Naive thymus-derived CD4-positive, alpha-beta T cell (primary cell): ENCODE measurements at regions of chrX and their contacts with region 1.

Region 1: GRCh38 chrX:129606918-129607317 is 47.8 kb downstream of the APLN start:
- DNase-seq: peak in 8 of 9 donors; percentile 29 to 63 (median 54)
- ATAC-seq: peak; percentile 75
- H3K4me3 ChIP-seq: no peak overlapping the region
- H3K4me3 Mint-ChIP-seq: no peak overlapping the region
- H3K27ac ChIP-seq: no peak overlapping the region
- H3K27ac Mint-ChIP-seq: peak overlapping the region in 1 of 9 donors; percentile 84
- H3K4me1 ChIP-seq: peaks cover 5 to 7% of the 10 kb centered on the region in 2 donors
- H3K4me1 Mint-ChIP-seq: peaks cover 4 to 35% (median 16%) of the 10 kb centered on the region in 7 donors
- H3K27me3 ChIP-seq: no peaks in the 10 kb centered on the region
- H3K27me3 Mint-ChIP-seq: no peaks in the 10 kb centered on the region

Region 2: DNA sequence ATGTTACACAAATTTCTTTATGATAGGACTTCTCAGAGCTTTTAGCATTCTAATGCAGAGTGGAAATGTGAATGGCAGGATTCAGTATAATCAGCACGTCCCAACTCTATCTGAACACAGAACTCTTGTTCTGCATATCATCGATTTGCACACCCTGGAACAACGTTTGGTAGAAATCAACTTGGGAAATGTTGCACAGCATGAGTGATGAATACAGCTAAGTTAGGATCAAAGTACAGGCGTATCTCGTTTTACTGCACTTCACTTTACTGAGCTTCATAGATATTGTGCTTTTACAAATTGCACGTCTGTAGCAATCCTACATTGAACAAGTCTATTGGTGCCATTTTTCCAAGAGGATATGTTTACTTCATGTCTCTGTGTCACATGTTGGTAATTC is 154.4 kb before region 1 on chrX:
- CTCF ChIA-PET with region 1: no interaction called
- POLR2A ChIA-PET with region 1: no interaction called
- intact Hi-C with region 1: no loop called
- DNase-seq: no peak
- ATAC-seq: no peak
- H3K4me3 ChIP-seq: no peak overlapping the region
- H3K4me3 Mint-ChIP-seq: no peak overlapping the region
- H3K27ac ChIP-seq: no peak overlapping the region
- H3K27ac Mint-ChIP-seq: no peak overlapping the region
- H3K4me1 ChIP-seq: no peaks in the 10 kb centered on the region
- H3K4me1 Mint-ChIP-seq: no peaks in the 10 kb centered on the region
- H3K27me3 ChIP-seq: no peaks in the 10 kb centered on the region
- H3K27me3 Mint-ChIP-seq: no peaks in the 10 kb centered on the region

Region 3: DNA sequence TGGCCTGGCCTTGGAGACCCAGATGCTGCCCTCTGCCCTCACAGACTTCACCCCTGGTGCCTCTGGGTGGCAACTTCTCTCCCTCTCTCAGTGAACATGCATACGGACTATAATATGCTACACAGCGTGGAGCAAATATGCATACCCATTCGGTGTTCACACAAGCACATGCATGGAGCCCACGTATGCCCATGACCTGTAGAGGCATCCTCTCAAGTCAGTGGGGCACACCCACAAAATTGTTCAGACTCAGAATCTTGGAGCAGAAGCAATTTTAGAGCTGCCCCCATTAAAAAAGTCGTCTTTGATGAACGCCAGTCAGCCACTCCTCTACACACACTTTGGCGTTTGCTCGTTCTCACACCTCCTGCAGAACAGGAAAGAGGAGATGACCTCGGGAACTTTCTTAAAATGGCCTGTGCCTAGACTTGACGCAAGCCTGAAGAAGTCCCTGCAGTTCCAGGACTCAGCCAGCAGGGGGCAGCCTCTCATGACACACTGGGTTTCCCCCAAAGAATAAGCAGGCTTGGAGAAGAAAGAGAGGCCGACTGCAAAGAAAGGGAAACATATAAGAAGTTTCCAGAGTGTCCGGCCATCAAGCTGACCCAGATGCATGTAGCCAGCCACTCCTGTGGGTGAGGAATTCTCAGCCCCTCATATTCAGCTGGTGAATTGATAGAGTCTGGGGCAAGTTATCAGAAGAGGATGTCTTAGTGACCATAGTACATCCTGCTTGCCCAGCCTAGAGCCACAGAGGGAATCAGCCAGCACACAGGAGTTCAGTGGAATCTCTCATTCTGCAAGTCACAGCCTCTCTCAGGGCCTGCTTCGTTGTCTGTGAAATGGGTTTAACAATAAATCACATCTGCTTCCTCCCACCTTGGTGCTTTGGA is 30.5 kb after region 1 on chrX:
- CTCF ChIA-PET with region 1: no interaction called
- POLR2A ChIA-PET with region 1: no interaction called
- intact Hi-C with region 1: loop called (anchors 1 to 2 kb)
- DNase-seq: peak; percentile 48 to 80 (median 63)
- ATAC-seq: peak; percentile 92
- H3K4me3 ChIP-seq: no peak overlapping the region
- H3K4me3 Mint-ChIP-seq: no peak overlapping the region
- H3K27ac ChIP-seq: no peak overlapping the region
- H3K27ac Mint-ChIP-seq: peak overlapping the region in 3 of 9 donors; percentile 34 to 68 (median 55)
- H3K4me1 ChIP-seq: peaks cover 0 to 4% of the 10 kb centered on the region in 2 donors
- H3K4me1 Mint-ChIP-seq: peaks cover 0 to 10% (median 0%) of the 10 kb centered on the region in 7 donors
- H3K27me3 ChIP-seq: no peaks in the 10 kb centered on the region
- H3K27me3 Mint-ChIP-seq: no peaks in the 10 kb centered on the region

Region 4: GRCh38 chrX:129876771-129877305 is 269.9 kb after region 1 on chrX:
- CTCF ChIA-PET with region 1: no interaction called
- POLR2A ChIA-PET with region 1: no interaction called
- intact Hi-C with region 1: loop called in 1 of 2 experiments (anchors 1 kb)
- DNase-seq: no peak
- ATAC-seq: no peak
- H3K4me3 ChIP-seq: no peak overlapping the region
- H3K4me3 Mint-ChIP-seq: no peak overlapping the region
- H3K27ac ChIP-seq: no peak overlapping the region
- H3K27ac Mint-ChIP-seq: no peak overlapping the region
- H3K4me1 ChIP-seq: no peaks in the 10 kb centered on the region
- H3K4me1 Mint-ChIP-seq: no peaks in the 10 kb centered on the region
- H3K27me3 ChIP-seq: no peaks in the 10 kb centered on the region
- H3K27me3 Mint-ChIP-seq: no peaks in the 10 kb centered on the region

Region 5: DNA sequence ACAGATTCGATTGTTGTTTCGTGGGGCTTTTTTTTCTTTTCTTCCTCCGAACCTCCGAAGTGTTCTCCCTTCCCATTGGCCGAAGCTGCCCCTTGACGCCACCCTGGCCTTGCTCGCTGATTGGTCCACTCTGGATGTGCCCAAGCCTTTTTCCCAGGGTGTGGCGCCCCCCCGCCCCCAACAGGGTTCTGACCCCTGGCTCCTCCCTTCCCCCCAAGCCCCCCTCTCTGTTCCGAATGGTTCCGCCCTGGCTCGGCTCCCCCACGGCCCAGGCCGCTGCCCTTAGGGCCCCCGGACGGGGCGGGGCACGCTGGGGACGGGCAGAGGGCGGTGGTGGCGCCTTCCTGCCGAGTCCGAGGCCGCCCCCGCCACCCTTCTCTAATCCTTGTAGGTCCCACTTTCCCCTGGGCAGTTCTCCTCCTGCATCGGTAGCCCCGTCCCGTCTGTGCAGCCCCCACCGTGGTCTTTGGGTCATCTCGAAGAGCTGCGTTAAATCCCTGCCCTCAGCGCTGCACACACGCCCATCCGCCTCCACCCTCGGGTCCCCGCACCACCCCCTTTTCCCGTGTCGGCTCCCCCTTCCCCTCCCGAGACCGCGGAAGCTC is 324.6 kb after region 1 on chrX:
- CTCF ChIA-PET with region 1: interaction called, 3 read pairs
- POLR2A ChIA-PET with region 1: no interaction called
- intact Hi-C with region 1: loop called in 1 of 2 experiments (anchors 5 kb)
- DNase-seq: peak; percentile 18 to 58 (median 33)
- ATAC-seq: peak; percentile 75
- H3K4me3 ChIP-seq: peak overlapping the region; percentile 61
- H3K4me3 Mint-ChIP-seq: peak overlapping the region; percentile 66 to 89 (median 80)
- H3K27ac ChIP-seq: peak overlapping the region; percentile 59
- H3K27ac Mint-ChIP-seq: peak overlapping the region; percentile 70 to 92 (median 85)
- H3K4me1 ChIP-seq: no peaks in the 10 kb centered on the region
- H3K4me1 Mint-ChIP-seq: peaks cover 0 to 6% (median 5%) of the 10 kb centered on the region in 7 donors
- H3K27me3 ChIP-seq: no peaks in the 10 kb centered on the region
- H3K27me3 Mint-ChIP-seq: peaks cover 0 to 20% (median 0%) of the 10 kb centered on the region in 5 donors

Region 6: DNA sequence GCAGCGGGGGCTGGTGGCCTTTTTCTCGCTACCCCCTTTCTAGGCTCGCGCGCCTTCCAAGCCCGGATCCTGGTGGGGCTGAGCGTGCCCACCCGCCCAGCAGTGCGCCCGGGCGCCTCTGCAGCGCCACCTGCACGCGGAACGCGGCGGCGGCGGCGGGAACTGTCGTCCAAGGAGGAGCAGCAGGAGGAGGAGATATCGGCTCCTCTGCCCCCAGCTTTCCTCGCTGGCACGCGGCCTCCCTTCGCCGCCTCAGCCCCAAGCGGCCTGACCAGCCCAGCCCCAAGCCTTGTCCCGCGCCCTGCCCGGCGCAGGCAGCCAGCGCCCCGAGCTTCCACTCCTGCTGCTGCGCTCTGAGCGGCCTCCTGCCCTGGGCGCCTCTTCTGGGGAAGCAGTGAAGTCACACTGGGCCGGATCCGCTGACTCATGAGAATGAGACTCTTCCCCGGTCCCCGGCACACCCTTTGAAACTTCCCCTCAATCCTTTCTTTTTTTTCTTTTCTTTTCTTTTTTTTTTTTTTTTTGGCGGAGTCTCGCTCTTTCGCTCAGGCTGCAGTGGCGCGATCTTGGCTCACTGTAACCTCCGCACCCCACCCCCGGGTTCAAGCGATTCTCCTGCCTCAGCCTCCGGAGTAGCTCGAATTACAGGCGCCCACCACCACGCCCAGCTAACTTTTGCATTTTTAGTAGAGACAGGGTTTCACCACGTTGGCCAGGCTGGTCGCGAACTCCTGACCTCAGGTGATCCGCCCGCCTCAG is 514.0 kb after region 1 on chrX:
- CTCF ChIA-PET with region 1: no interaction called
- POLR2A ChIA-PET with region 1: no interaction called
- intact Hi-C with region 1: loop called in 1 of 2 experiments (anchors 5 kb)
- DNase-seq: peak; percentile 50 to 75 (median 68)
- ATAC-seq: peak; percentile 91
- H3K4me3 ChIP-seq: peak overlapping the region; percentile 53
- H3K4me3 Mint-ChIP-seq: peak overlapping the region; percentile 29 to 74 (median 71)
- H3K27ac ChIP-seq: no peak overlapping the region
- H3K27ac Mint-ChIP-seq: peak overlapping the region in 1 of 9 donors; percentile 58
- H3K4me1 ChIP-seq: no peaks in the 10 kb centered on the region
- H3K4me1 Mint-ChIP-seq: peaks cover 0 to 19% (median 4%) of the 10 kb centered on the region in 7 donors
- H3K27me3 ChIP-seq: no peaks in the 10 kb centered on the region
- H3K27me3 Mint-ChIP-seq: no peaks in the 10 kb centered on the region

Region 7: DNA sequence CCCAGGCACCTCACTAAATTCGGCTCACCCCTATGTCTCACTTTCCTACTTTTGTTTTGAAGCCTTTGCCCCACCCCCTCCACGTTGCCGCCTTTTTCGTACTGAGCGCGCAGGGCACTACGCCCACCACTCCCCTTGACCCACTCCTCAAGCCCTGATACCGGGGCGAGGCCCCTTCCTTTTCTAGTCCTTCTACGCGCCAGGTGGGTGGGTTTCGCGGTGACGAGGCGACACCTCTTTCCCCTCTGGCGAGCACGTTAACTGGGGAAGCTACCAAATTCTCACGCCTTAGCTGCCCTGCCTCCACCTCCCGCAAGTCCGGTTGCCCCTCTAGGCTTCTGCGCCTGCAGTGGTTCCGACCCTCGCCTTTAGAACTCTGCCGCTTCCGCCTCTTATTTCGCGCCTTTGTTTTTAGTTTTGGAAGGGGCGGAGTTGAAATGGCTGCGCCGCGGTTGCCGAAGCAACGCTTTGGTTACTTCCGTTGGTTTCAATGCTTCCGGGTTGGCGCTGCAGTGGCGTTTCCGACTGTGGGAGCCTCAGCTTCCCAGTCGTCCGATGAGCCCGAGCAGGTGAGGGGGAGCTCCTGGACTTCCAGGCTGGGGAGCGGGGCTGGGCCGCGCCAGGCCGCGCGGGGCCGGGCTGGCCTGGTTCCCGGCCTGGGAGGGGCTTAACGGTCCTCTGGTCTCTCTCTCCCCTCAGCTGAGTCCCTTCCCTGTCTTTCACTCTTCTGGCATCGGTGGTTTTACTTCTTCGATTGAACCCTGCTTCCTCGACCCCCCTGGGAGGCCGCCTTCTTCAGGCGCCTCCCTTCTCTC is 732.7 kb after region 1 on chrX and contains the start of gene SLC25A14:
- CTCF ChIA-PET with region 1: no interaction called
- POLR2A ChIA-PET with region 1: no interaction called
- intact Hi-C with region 1: loop called in 1 of 2 experiments (anchors 10 kb)
- DNase-seq: peak; percentile 33 to 79 (median 72)
- ATAC-seq: peak; percentile 94
- H3K4me3 ChIP-seq: peak within 1 kb of the TSS; percentile 90
- H3K4me3 Mint-ChIP-seq: peak within 1 kb of the TSS; percentile 89 to 99 (median 94)
- H3K27ac ChIP-seq: peak within 1 kb of the TSS; percentile 68
- H3K27ac Mint-ChIP-seq: peak within 1 kb of the TSS; percentile 80 to 95 (median 90)
- H3K4me1 ChIP-seq: peaks cover 4 to 5% of the 10 kb centered on the region in 2 donors
- H3K4me1 Mint-ChIP-seq: peaks cover 7 to 25% (median 21%) of the 10 kb centered on the region in 7 donors
- H3K27me3 ChIP-seq: no peaks in the 10 kb centered on the region
- H3K27me3 Mint-ChIP-seq: no peaks in the 10 kb centered on the region
- total RNA-seq, gene SLC25A14: 10.7 to 14.3 (median 13.8) TPM